ENCODE measurements at regions of chr11 and their contacts with region 1.

Region 1: DNA sequence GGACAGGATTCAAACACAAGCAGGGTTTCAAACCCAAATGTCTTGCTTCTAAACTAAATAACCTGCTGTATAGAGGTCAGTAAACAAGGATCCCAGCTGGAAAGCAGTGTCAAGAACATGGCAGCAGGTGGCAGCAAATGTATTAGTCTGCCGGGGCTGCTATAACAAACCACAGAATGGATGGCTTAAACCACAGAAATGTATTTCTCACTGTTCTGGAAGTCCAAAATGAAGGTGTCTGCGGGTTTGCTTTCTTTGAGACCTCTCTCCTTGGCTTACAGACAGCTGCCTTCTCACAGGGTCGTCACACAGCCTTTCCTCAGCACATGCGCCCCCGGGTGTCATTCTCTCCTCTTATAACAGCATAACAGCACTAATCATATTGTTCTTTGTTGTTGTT is 65.1 kb upstream of the LRRC55 start:
- DNase-seq: peak; percentile 57
- H3K4me3 ChIP-seq: no peak overlapping the region
- H3K27ac ChIP-seq: no peak overlapping the region
- H3K4me1 ChIP-seq: no peaks in the 10 kb centered on the region
- H3K27me3 ChIP-seq: peaks cover 0 to 1% of the 10 kb centered on the region in 2 experiments
- CTCF ChIP-seq: peak; percentile 44 to 62
- POLR2A ChIP-seq: no peak

Region 2: GRCh38 chr11:57001674-57002401 is 114.8 kb before region 1 on chr11:
- CTCF ChIA-PET with region 1: no interaction called
- POLR2A ChIA-PET with region 1: no interaction called
- dilution Hi-C with region 1: no loop called
- intact Hi-C with region 1: loop called (anchors 1 kb)
- DNase-seq: peak; percentile 2
- H3K4me3 ChIP-seq: no peak overlapping the region
- H3K27ac ChIP-seq: no peak overlapping the region
- H3K4me1 ChIP-seq: no peaks in the 10 kb centered on the region
- H3K27me3 ChIP-seq: no peaks in the 10 kb centered on the region
- CTCF ChIP-seq: peak; percentile 17 to 45
- POLR2A ChIP-seq: no peak

Region 3: GRCh38 chr11:57131080-57131790 is 14.6 kb after region 1 on chr11:
- CTCF ChIA-PET with region 1: no interaction called
- POLR2A ChIA-PET with region 1: no interaction called
- dilution Hi-C with region 1: no loop called
- intact Hi-C with region 1: loop called (anchors 1 kb)
- DNase-seq: peak; percentile 47
- H3K4me3 ChIP-seq: no peak overlapping the region
- H3K27ac ChIP-seq: no peak overlapping the region
- H3K4me1 ChIP-seq: peaks cover 4% of the 10 kb centered on the region
- H3K27me3 ChIP-seq: peaks cover 0 to 2% of the 10 kb centered on the region in 2 experiments
- CTCF ChIP-seq: peak; percentile 43 to 70
- POLR2A ChIP-seq: no peak

Measured in endothelial cell of umbilical vein (primary cell).